Heart left ventricle (tissue), 16 donors: ENCODE measurements at regions of chr10 and their contacts with region 1.

Region 1: DNA sequence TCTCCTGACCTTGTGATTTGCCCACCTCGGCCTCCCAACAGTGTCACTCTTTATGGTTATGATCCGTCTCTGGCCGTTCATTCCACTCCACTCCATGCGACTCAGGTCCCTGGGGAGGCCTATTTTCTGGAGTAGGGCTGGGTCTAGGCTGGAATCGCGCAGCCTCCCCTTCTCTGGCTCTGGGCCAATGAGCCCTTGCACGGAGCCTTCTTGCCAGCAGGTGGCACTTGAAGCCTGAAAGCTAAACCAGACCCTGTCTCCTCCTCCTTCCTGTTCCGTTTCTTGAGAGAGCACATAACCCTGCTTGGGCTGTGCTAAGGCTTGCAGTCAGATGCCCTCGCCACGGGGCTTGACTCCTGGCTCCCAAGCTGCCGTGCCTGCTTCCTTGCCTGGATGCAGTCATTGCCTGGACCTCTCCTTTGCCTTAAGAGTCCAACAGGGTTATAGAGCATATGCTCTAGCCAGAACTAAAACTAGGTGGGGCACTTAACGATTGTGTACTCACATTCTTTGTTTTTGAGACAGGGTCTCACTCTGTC is 9.6 kb upstream of the DNAJB12 start:
- DNase-seq: peak; percentile 88 to 93 (median 92)
- ATAC-seq: peak; percentile 88 to 96 (median 96)
- H3K4me3 ChIP-seq: peak overlapping the region in 8 of 12 donors; percentile 4 to 40 (median 26)
- H3K27ac ChIP-seq: peak overlapping the region in 10 of 12 donors; percentile 2 to 67 (median 56)
- H3K4me1 ChIP-seq: peaks cover 0 to 14% (median 9%) of the 10 kb centered on the region in 12 donors
- H3K27me3 ChIP-seq: no peaks in the 10 kb centered on the region
- CTCF ChIP-seq: peak; percentile 87 to 98 (median 92)
- POLR2A ChIP-seq: peak in 1 of 2 donors; percentile 52

Region 2: DNA sequence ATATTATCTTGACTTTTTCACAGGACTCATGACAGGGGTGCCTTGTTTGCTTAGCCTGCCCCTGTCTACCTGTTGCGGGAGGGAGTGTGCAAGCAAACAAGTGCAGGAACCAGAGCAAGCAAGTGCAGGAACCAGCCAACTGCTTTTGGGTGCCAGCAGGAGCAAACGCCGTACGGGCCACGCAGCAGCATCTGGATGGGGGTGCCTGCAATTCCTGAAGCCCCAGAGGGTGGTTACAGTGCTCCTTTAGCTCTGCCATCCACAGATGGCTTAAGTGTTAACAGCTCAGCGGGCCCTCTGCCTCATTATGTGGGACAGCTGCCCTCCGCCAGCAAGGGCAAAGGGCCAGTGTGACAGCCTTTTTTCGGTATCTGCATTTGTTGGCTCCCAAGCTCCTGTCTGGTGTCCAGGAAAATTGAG is 178.1 kb after region 1 on chr10:
- intact Hi-C with region 1: loop called in 1 of 10 experiments (anchors 10 kb)
- DNase-seq: peak in 2 of 5 donors; percentile 20 to 34
- ATAC-seq: peak in 2 of 4 donors; percentile 45 to 65
- H3K4me3 ChIP-seq: peak overlapping the region in 1 of 12 donors; percentile 10
- H3K27ac ChIP-seq: no peak overlapping the region
- H3K4me1 ChIP-seq: peaks cover 0 to 27% (median 0%) of the 10 kb centered on the region in 12 donors
- H3K27me3 ChIP-seq: no peaks in the 10 kb centered on the region
- CTCF ChIP-seq: no peak
- POLR2A ChIP-seq: no peak

Region 3: DNA sequence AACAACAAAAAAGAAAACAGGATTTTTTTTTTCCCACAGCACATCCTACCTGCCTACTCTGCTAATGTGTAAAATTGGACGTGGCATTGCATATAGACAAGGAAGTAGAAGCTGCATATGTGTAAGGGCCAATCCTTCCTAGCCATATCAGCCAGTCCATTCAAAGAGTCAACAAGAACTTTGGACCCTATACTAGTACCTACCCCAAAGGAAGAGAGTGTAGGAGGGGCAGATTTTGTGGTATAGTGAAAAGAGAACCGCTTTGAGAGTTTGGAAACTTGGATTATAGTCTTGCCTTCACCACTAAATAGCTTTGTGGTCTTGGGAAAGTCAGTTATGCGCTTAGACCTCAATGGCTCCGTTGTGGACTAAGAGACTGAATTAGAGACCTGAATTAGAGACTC is 315.5 kb after region 1 on chr10:
- intact Hi-C with region 1: no loop called
- DNase-seq: no peak
- ATAC-seq: no peak
- H3K4me3 ChIP-seq: no peak overlapping the region
- H3K27ac ChIP-seq: no peak overlapping the region
- H3K4me1 ChIP-seq: peaks cover 0 to 9% (median 0%) of the 10 kb centered on the region in 12 donors
- H3K27me3 ChIP-seq: no peaks in the 10 kb centered on the region
- CTCF ChIP-seq: no peak
- POLR2A ChIP-seq: no peak

Region 4: GRCh38 chr10:72692057-72692910 is 328.0 kb after region 1 on chr10 and contains the start of gene MCU:
- intact Hi-C with region 1: loop called in 9 of 10 experiments (anchors 2 to 10 kb)
- DNase-seq: peak; percentile 95 to 97 (median 96)
- ATAC-seq: peak; percentile 99
- H3K4me3 ChIP-seq: peak within 1 kb of the TSS; percentile 71 to 97 (median 85)
- H3K27ac ChIP-seq: peak within 1 kb of the TSS; percentile 83 to 96 (median 93)
- H3K4me1 ChIP-seq: peaks cover 0 to 33% (median 21%) of the 10 kb centered on the region in 12 donors
- H3K27me3 ChIP-seq: no peaks in the 10 kb centered on the region
- CTCF ChIP-seq: no peak
- POLR2A ChIP-seq: peak in 1 of 2 donors; percentile 86
- total RNA-seq, gene MCU: 11.4 to 16.9 (median 13.7) TPM

Region 5: DNA sequence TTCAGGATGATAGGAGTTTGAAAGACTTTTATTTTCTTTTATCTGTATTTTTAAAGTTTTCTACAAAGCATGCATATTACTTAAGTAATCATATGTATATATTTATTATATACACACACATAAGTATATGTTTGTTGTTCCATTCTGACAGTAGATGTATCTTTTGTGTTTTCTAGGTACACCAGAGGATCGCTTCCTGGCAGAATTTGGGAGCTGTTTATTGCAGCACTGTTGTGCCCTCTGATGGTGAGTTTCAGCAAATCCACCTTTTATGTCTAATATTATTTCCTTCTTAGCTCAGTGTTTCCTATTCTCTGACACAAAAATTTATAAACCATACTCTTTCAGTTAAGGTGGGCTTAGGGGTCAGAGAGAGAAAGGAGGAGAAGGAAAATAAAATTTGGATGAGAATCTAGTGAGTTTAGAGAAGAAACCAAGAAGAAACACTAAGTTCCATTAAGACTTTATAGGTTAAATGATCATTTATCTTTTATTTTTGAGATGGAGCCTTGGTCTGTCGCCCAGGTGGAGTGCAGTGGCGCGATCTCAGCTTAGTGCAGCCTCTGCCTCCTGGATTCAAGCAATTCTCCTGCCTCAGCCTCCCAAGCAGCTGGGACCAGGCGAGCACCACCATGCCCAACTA is 470.0 kb after region 1 on chr10:
- intact Hi-C with region 1: loop called (anchors 1 to 5 kb)
- DNase-seq: peak in 3 of 5 donors; percentile 27 to 50 (median 43)
- ATAC-seq: peak in 3 of 4 donors; percentile 63 to 85 (median 83)
- H3K4me3 ChIP-seq: no peak overlapping the region
- H3K27ac ChIP-seq: no peak overlapping the region
- H3K4me1 ChIP-seq: peaks cover 0 to 40% (median 11%) of the 10 kb centered on the region in 12 donors
- H3K27me3 ChIP-seq: no peaks in the 10 kb centered on the region
- CTCF ChIP-seq: peak; percentile 45 to 80 (median 70)
- POLR2A ChIP-seq: no peak

Region 6: DNA sequence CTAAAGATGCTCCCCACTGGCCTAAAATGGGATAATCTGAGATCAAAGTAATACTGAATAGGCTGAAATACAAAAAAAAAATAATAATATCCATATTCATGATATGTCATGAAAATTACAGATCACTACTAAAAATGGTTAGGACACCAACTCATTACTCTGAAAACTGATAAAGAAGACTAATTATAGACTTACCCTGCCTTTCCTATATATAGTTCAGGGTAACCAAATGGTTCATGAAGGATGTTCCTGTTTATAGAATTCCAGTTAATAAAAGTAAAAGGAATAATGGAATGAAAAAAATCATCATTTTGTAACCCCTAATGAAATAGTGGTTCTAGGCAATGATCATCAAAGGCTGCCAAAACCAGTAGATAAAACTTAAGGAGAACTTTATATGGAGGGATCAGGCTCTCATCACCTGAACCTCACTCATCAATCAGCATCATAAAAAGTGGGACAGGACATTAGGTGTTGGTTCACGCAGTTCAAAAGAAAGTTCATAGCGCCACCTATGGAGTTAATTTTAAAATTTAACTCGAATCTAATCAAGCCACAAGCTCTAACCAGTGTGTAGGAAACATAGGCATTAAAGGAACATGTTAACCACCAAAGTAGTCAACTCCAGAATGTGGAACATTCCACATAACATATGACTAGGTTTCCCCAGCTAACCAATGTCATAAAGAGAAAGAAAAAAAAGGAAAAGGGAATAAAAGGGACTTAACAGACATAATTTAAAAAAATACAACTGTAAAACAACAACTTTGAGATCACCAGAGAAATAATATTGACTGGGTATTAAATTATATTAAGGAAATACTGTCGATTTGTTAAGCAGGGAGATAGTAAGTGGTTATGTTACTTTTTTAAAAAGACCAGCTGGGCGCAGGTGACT is 696.7 kb after region 1 on chr10:
- intact Hi-C with region 1: loop called in 4 of 10 experiments (anchors 10 kb)
- DNase-seq: no peak
- ATAC-seq: peak; percentile 39 to 55 (median 52)
- H3K4me3 ChIP-seq: no peak overlapping the region
- H3K27ac ChIP-seq: peak overlapping the region in 10 of 12 donors; percentile 1 to 70 (median 49)
- H3K4me1 ChIP-seq: peaks cover 0 to 19% (median 11%) of the 10 kb centered on the region in 12 donors
- H3K27me3 ChIP-seq: no peaks in the 10 kb centered on the region
- CTCF ChIP-seq: peak in 11 of 12 donors; percentile 7 to 56 (median 33)
- POLR2A ChIP-seq: no peak

Region 7: GRCh38 chr10:73182568-73182967 is 818.3 kb after region 1 on chr10:
- intact Hi-C with region 1: no loop called
- DNase-seq: no peak
- ATAC-seq: no peak
- H3K4me3 ChIP-seq: no peak overlapping the region
- H3K27ac ChIP-seq: no peak overlapping the region
- H3K4me1 ChIP-seq: no peaks in the 10 kb centered on the region
- H3K27me3 ChIP-seq: no peaks in the 10 kb centered on the region
- CTCF ChIP-seq: no peak
- POLR2A ChIP-seq: no peak